K562 (cell line): ENCODE measurements at regions of chr20 and their contacts with region 1.

Region 1: DNA sequence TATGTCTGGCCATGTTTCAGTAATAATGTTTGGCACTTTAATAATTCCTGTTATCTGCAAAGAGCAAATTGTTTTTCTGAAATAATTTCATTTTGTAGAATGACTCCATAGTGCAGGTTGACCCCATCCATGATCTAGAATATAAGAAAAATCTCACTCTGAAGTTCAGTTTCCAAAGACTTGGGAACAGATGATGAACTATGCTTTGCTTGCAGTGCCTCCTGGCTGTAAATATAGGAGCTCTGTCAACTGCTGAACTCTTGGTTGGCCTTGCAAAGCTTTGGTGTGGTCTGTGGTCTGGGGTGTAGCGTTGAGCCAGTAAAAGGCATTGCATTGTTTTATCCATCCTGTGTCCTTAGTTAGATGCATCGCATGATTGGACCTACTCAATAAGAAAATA is 104.0 kb downstream of the PLCB4 start:
- DNase-seq: peak in 1 of 4 experiments; percentile 16
- ATAC-seq: peak; percentile 62
- H3K4me3 ChIP-seq: no peak overlapping the region
- H3K27ac ChIP-seq: no peak overlapping the region
- H3K4me1 ChIP-seq: no peaks in the 10 kb centered on the region
- H3K27me3 ChIP-seq: no peaks in the 10 kb centered on the region
- CTCF ChIP-seq: peak; percentile 17 to 44 (median 20); a peak in 3 of 6 replicates
- EP300 ChIP-seq: no peak
- POLR2A ChIP-seq: no peak
- RAD21 ChIP-seq: peak; percentile 53 to 71

Region 2: DNA sequence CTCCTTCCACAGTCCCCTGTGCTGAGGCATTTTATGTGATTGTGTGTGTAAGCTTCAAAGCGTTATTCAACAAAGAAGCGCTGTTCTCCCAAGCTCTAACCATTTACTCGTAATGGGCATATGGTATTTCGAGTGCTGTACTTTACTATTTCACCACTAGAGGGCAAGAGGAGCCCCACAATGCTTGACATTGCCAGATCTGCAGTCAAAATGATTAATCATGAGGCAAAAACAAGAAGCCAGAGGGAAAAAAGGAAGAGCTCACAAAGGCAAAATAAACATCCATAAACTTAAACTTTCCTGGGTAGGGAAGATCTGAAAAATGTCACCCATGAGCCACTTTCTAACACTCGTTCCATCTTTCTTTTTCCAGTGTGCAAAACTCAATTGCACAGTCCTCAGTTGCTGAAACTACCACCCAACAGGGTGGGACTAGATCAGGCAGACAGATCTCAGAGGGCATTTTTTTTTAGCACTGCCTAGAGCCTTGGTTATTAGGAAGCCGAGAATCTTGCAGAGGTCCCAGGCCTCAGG is 319.0 kb before region 1 on chr20:
- CTCF ChIA-PET with region 1: interaction called, 3 read pairs
- POLR2A ChIA-PET with region 1: no interaction called
- in situ Hi-C with region 1: no loop called
- intact Hi-C with region 1: loop called (anchors 2 kb)
- DNase-seq: peak; percentile 39 to 61 (median 40)
- ATAC-seq: peak; percentile 88
- H3K4me3 ChIP-seq: no peak overlapping the region
- H3K27ac ChIP-seq: no peak overlapping the region
- H3K4me1 ChIP-seq: no peaks in the 10 kb centered on the region
- H3K27me3 ChIP-seq: no peaks in the 10 kb centered on the region
- CTCF ChIP-seq: peak; percentile 55 to 71 (median 68); a peak in 5 of 6 replicates
- EP300 ChIP-seq: no peak
- POLR2A ChIP-seq: no peak
- RAD21 ChIP-seq: peak; percentile 72 to 75

Region 3: DNA sequence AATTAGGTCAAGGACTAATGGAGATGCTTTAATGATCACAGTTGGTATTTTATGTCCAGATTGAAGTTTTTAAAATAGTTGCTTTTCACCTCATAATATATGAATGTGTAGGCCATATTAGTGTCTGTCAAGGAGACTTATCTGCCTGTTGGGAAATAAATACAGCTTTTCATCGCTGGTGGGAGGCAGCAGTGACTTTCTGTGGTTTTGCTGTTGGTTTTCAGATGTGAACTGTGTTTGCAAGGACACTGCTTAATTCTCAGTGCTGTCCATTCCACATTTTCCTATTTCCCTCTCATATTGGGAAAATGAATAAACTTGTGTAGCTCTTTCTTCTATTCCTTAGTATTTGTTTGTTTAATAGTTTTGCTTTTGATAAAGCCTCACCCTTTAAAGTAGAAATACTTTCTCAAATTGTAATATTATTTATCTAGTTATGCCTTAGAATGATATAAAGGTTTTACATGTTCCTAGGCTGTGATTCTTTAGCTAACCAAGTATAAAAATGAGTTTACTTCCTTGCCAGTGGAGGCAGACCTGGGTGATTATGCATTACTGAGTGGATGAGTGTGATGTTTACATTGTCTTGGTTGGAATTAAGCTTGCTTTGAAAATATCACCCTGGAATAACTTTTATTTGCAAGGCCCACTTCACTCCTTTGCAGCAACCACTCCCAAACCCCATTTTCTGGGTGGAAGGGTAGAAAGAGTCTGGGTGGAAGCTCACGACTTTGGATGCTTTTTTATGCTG is 100.7 kb before region 1 on chr20:
- CTCF ChIA-PET with region 1: no interaction called
- POLR2A ChIA-PET with region 1: no interaction called
- in situ Hi-C with region 1: no loop called
- intact Hi-C with region 1: loop called (anchors 5 kb)
- DNase-seq: no peak
- ATAC-seq: no peak
- H3K4me3 ChIP-seq: no peak overlapping the region
- H3K27ac ChIP-seq: no peak overlapping the region
- H3K4me1 ChIP-seq: peaks cover 0 to 12% of the 10 kb centered on the region in 2 experiments; a peak in 4 of 5 replicates
- H3K27me3 ChIP-seq: no peaks in the 10 kb centered on the region
- CTCF ChIP-seq: no peak
- EP300 ChIP-seq: no peak
- POLR2A ChIP-seq: no peak
- RAD21 ChIP-seq: no peak